A549 (cell line): ENCODE measurements at regions of chr1 and their contacts with region 1.

Region 1: DNA sequence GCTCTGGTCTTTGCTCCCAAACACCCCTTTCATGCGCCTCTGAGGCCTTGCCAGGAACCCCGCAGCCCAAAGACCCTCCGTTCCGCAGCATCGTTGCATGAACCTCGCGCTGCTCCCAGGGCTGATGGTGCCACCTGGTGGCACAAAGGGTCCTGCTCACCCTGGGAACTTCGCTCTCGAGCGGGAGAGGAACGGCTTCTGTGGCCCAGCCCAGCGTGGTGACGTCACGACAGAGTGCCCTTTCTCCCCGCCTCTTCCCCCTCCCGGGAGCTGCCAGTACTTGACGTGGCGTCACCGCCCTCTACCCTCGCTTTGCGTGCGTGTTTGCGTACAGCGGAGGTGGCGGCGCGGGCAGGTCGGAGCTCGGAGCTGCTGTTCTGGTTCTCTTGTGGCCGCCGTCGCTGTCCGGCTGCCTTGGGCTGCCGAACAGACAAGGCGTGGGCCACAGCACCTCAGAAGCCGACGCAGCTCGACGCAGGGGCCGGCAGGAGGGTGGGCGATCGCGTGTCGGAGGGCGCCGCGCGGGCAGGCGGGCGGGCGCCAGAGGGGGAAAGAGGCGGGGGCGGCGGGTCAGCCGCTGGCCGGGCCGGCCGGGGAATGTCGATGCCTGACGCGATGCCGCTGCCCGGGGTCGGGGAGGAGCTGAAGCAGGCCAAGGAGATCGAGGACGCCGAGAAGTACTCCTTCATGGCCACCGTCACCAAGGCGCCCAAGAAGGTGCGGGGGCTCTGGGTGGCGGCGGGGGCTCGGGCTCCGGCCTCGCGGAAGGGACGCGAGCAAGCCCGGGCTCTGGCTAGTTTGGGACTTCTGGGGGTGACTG is at the start of gene AHCYL1:
- DNase-seq: peak; percentile 92 to 97
- ATAC-seq: peak; percentile 84 to 89
- H3K4me3 ChIP-seq: peak within 1 kb of the TSS; percentile 89
- H3K27ac ChIP-seq: peak within 1 kb of the TSS; percentile 95 to 98
- H3K4me1 ChIP-seq: peaks cover 72% of the 10 kb centered on the region
- CTCF ChIP-seq: peak; percentile 86
- EP300 ChIP-seq: no peak
- POLR2A ChIP-seq: peak; percentile 77
- RAD21 ChIP-seq: peak; percentile 97 to 99
- polyA plus RNA-seq, gene AHCYL1: 147 and 148 TPM in 2 replicates

Region 2: GRCh38 chr1:109620841-109621286 is 363.8 kb before region 1 on chr1:
- CTCF ChIA-PET with region 1: interaction called, 11 read pairs
- POLR2A ChIA-PET with region 1: no interaction called
- DNase-seq: peak; percentile 87 to 92
- ATAC-seq: peak; percentile 82 to 88
- H3K4me3 ChIP-seq: peak overlapping the region; percentile 90
- H3K27ac ChIP-seq: peak overlapping the region; percentile 93 to 98
- H3K4me1 ChIP-seq: peaks cover 31% of the 10 kb centered on the region
- CTCF ChIP-seq: no peak
- EP300 ChIP-seq: no peak
- POLR2A ChIP-seq: no peak
- RAD21 ChIP-seq: no peak

Region 3: DNA sequence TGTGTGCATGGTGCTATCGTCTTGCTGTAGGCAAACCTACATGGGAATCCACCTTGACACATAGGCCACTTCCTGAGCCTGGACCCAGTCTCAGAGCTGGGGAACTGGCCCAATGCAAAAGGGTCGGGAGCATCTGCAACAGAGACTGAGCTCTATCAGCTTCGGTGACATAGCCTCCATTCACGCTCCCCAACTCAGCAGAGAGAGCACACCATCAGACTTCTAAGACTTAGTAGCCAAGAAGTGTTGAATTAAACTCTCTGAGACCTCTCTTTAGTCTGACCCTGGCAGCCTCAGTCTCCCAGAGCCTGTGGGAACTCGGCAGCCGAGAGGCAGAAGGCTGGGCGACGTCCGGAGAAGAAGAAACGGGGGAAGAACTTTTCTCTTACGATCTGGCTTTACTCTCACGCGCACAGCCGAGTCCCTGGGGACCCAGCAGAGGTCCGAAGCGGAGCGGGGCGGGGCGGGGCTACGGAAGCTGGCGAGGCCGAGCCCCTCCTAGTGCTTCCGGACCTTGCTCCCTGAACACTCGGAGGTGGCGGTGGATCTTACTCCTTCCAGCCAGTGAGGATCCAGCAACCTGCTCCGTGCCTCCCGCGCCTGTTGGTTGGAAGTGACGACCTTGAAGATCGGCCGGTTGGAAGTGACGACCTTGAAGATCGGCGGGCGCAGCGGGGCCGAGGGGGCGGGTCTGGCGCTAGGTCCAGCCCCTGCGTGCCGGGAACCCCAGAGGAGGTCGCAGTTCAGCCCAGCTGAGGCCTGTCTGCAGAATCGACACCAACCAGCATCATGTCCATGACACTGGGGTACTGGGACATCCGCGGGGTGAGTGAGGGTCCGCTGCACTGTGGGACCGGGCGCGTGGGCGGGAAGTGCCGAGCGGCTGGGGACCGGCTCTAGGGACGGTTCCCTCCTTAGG is 328.8 kb before region 1 on chr1 and contains the start of gene GSTM4:
- CTCF ChIA-PET with region 1: interaction called, 15 read pairs
- POLR2A ChIA-PET with region 1: no interaction called
- DNase-seq: peak; percentile 53 to 60
- ATAC-seq: peak; percentile 95 to 96
- H3K4me3 ChIP-seq: peak within 1 kb of the TSS; percentile 73
- H3K27ac ChIP-seq: peak within 1 kb of the TSS; percentile 77 to 89
- H3K4me1 ChIP-seq: peaks cover 5% of the 10 kb centered on the region; the same call in 1 of the 3 replicates
- CTCF ChIP-seq: no peak
- EP300 ChIP-seq: no peak
- POLR2A ChIP-seq: 0 out of 2 replicates have a peak, but pooled peaks have one; percentile 17
- RAD21 ChIP-seq: no peak
- polyA plus RNA-seq, gene GSTM4: 17.2 and 21.7 TPM in 2 replicates

Region 4: DNA sequence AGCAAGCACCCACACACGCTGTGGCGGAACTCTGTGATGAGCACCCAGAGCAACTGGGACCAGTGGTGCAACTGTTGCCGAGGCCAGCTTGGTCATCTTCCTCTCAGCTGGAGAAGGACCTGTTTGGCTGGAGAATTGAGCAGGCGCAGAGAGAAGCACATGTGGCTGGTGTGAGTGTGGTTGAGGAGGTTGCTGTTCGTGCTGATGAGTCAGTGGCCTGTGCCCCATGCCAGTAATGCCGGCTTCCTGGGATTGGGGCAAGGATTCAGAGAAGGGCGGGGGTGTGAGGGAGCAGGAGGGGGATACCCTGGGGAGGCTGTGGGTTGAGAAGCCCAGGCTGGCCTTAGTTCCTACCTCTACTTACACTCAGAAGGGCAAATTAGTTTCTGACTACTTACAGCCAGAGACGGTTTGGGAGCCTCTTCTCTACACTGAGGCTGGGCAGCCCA is 163.4 kb before region 1 on chr1:
- CTCF ChIA-PET with region 1: interaction called, 12 read pairs
- POLR2A ChIA-PET with region 1: no interaction called
- DNase-seq: peak; percentile 56 to 70
- ATAC-seq: peak; percentile 56 to 64
- H3K4me3 ChIP-seq: no peak overlapping the region
- H3K27ac ChIP-seq: peak overlapping the region; percentile 94 to 98
- H3K4me1 ChIP-seq: peaks cover 58% of the 10 kb centered on the region
- CTCF ChIP-seq: no peak
- EP300 ChIP-seq: no peak
- POLR2A ChIP-seq: no peak
- RAD21 ChIP-seq: no peak

Region 5: GRCh38 chr1:109923131-109923945 is 61.3 kb before region 1 on chr1:
- CTCF ChIA-PET with region 1: interaction called, 63 read pairs
- POLR2A ChIA-PET with region 1: interaction called, 3 read pairs
- DNase-seq: no peak
- ATAC-seq: peak in 1 of 2 experiments; percentile 70; a peak in 4 of 6 replicates
- H3K4me3 ChIP-seq: no peak overlapping the region
- H3K27ac ChIP-seq: peak overlapping the region; percentile 37 to 88; a peak in 3 of 6 replicates
- H3K4me1 ChIP-seq: peaks cover 27% of the 10 kb centered on the region
- CTCF ChIP-seq: peak; percentile 34
- EP300 ChIP-seq: no peak
- POLR2A ChIP-seq: no peak
- RAD21 ChIP-seq: peak; percentile 40 to 56; a peak in 3 of 5 replicates

Region 6: GRCh38 chr1:110003747-110004630 is 19.3 kb after region 1 on chr1:
- CTCF ChIA-PET with region 1: interaction called, 46 read pairs
- POLR2A ChIA-PET with region 1: interaction called, 3 read pairs
- DNase-seq: peak; percentile 47 to 88
- ATAC-seq: peak; percentile 89 to 93
- H3K4me3 ChIP-seq: peak overlapping the region; percentile 47
- H3K27ac ChIP-seq: peak overlapping the region; percentile 84 to 88
- H3K4me1 ChIP-seq: peaks cover 71% of the 10 kb centered on the region
- CTCF ChIP-seq: no peak
- EP300 ChIP-seq: peak; percentile 25 to 47; a peak in 2 of 5 replicates
- POLR2A ChIP-seq: no peak
- RAD21 ChIP-seq: no peak

Region 7: GRCh38 chr1:110114837-110115183 is 130.1 kb after region 1 on chr1:
- CTCF ChIA-PET with region 1: no interaction called
- POLR2A ChIA-PET with region 1: no interaction called
- DNase-seq: no peak
- ATAC-seq: no peak
- H3K4me3 ChIP-seq: no peak overlapping the region
- H3K27ac ChIP-seq: no peak overlapping the region
- H3K4me1 ChIP-seq: no peaks in the 10 kb centered on the region
- CTCF ChIP-seq: no peak
- EP300 ChIP-seq: no peak
- POLR2A ChIP-seq: no peak
- RAD21 ChIP-seq: no peak